PC-3 (cell line): ENCODE measurements at regions of chr7 and their contacts with region 1.

Region 1: DNA sequence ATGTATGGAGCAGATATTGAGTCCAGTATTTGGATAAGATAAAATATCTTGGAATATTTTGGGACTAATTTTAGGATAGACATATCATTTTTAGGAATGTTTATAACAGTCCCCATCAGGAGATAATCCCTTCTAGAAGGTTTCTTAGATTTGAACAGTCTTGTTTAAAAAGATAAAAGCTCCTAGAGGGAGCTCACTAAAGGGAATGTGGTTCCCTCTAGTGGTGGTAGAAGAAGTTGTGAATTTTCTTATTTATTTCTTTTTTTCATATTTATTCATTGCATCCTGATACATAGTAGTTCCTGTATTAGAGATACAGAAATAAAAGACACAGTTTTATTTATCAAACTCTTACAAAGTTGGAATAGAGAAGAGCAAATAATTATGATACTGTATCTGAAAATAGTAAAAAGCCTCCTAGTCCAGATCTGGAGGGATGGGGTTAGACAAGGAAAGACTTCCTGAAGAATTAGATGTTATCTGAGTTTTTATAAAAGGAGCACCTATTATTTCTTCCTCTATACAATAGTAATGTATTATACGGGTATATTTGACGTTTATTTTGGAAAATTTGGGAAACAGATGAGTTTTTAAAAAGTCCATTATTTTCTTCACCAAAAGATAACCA is 24.5 kb upstream of the KLF14 start:
- DNase-seq: peak; percentile 67
- ATAC-seq: peak; percentile 70
- H3K4me3 ChIP-seq: no peak overlapping the region
- H3K27ac ChIP-seq: no peak overlapping the region
- H3K4me1 ChIP-seq: no peaks in the 10 kb centered on the region
- H3K27me3 ChIP-seq: peaks cover under 1% of the 10 kb centered on the region; the same call in 1 of the 2 replicates
- CTCF ChIP-seq: peak; percentile 83

Region 2: GRCh38 chr7:130845581-130846085 is 87.1 kb after region 1 on chr7:
- CTCF ChIA-PET with region 1: interaction called, 3 read pairs
- POLR2A ChIA-PET with region 1: interaction called, 16 read pairs
- intact Hi-C with region 1: no loop called
- DNase-seq: peak; percentile 89
- ATAC-seq: peak; percentile 90
- H3K4me3 ChIP-seq: peak overlapping the region; percentile 55
- H3K27ac ChIP-seq: peak overlapping the region; percentile 98
- H3K4me1 ChIP-seq: peaks cover 28% of the 10 kb centered on the region
- H3K27me3 ChIP-seq: no peaks in the 10 kb centered on the region
- CTCF ChIP-seq: no peak